Activated B cell treated with CpG ODN at 0.5 μM for 24 hours (primary cell): ENCODE measurements at regions of chr20 and their contacts with region 1.

Region 1: GRCh38 chr20:47620808-47621805 is 119.4 kb downstream of the NCOA3 start:
- DNase-seq: no peak
- ATAC-seq: peak; percentile 58
- H3K4me3 Mint-ChIP-seq: no peak overlapping the region
- H3K27ac Mint-ChIP-seq: peak overlapping the region; percentile 68
- H3K4me1 Mint-ChIP-seq: peaks cover 32% of the 10 kb centered on the region
- H3K27me3 Mint-ChIP-seq: no peaks in the 10 kb centered on the region
- CTCF ChIP-seq: peak; percentile 29

Region 2: DNA sequence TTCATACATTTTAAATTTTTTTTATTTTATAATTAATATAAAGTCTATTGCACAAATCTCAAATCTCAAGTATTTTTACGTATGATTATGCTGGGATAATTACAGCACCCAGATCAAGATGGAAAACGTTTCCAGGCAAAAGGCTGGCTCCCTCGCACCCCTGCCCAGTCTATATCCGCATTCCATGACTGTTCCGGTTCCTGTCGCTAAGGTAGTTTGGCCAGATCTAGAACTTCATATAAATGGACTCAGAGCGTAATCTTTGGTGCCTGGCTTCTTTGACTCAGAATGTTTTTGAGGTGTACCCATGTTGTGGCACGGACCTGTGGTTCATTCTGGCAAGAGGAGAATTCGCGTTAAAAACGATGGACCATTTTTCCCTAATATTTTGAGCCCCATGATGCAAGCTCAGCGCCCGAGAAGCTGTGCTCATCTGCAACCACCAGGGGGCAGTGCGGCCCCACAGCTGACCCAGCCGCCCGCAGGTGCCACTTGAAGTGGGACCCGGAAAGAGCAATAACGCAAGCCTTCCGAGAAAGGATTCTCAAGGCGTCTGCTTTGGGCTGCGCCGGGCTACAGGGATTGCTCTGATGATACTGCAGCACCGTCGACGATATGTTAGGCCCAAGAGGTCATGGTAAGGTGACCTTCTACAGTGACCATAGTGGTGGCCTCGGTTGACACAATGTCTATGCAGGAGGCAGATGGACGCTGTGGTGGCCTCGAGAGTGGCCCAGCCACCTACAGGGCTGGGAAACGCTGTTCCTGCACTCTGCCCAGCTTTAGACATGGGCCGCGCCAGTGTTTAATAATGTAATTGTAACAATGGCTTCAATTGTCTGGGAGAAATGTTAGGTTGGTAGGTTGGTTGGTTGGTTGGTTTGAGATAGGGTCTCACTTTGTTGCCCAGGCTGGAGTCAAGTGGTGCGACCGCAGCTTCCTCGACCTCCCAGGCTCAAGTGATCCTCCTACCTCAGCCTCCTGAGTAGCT is 424.7 kb before region 1 on chr20:
- CTCF ChIA-PET with region 1: interaction called, 6 read pairs
- POLR2A ChIA-PET with region 1: no interaction called
- intact Hi-C with region 1: loop called (anchors 1 kb)
- DNase-seq: peak; percentile 74
- ATAC-seq: peak; percentile 95
- H3K4me3 Mint-ChIP-seq: no peak overlapping the region
- H3K27ac Mint-ChIP-seq: no peak overlapping the region
- H3K4me1 Mint-ChIP-seq: peaks cover 7% of the 10 kb centered on the region
- H3K27me3 Mint-ChIP-seq: peaks cover 3% of the 10 kb centered on the region
- CTCF ChIP-seq: peak; percentile 95

Region 3: DNA sequence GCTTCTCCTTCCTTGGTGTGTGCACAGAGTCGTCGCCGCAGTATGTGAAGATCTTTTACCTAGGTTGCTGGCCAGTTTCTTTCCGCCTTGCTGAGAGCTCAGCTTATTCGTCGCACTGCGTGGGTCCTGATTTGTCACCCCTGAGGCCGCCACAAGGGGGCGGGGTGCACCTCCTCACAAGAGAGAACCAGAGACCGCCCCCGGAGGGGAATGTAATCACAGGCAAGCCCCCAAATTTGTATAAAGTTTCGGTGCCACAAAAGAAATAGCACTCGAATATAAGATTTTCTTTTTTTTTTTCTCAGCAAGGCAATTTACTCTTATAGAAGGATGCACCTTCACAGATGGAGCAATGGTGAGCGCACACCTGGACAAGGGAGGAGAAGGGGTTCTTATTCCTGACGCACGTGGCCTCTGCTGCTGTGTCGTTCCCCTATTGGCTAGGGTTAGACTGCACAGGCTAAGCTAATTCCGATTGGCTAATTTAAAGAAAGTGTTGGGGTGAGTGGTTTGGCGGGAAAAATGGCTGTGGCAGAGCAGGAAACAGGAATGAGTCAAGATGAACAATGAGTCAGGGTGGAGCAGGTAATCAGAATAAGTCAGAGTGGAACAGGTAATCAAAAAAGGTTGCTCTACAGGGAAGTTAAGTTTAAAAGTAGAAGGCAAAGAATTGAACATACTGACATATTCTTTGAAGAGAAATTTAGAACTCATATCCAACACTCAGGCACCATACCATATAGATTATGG is 99.9 kb before region 1 on chr20:
- CTCF ChIA-PET with region 1: no interaction called
- POLR2A ChIA-PET with region 1: interaction called, 11 read pairs
- intact Hi-C with region 1: no loop called
- DNase-seq: no peak
- ATAC-seq: no peak
- H3K4me3 Mint-ChIP-seq: no peak overlapping the region
- H3K27ac Mint-ChIP-seq: peak overlapping the region; percentile 75
- H3K4me1 Mint-ChIP-seq: peaks cover 60% of the 10 kb centered on the region
- H3K27me3 Mint-ChIP-seq: no peaks in the 10 kb centered on the region
- CTCF ChIP-seq: no peak

Region 4: GRCh38 chr20:48034749-48035505 is 413.8 kb after region 1 on chr20:
- CTCF ChIA-PET with region 1: no interaction called
- POLR2A ChIA-PET with region 1: no interaction called
- intact Hi-C with region 1: no loop called
- DNase-seq: no peak
- ATAC-seq: no peak
- H3K4me3 Mint-ChIP-seq: no peak overlapping the region
- H3K27ac Mint-ChIP-seq: no peak overlapping the region
- H3K4me1 Mint-ChIP-seq: no peaks in the 10 kb centered on the region
- H3K27me3 Mint-ChIP-seq: peaks cover 8% of the 10 kb centered on the region
- CTCF ChIP-seq: no peak